Posterior vena cava (tissue), 2 donors: ENCODE measurements at regions of chr12 and their contacts with region 1.

Region 1: GRCh38 chr12:55926738-55927587 is 731 bp downstream of the PYM1 start:
- DNase-seq: peak; percentile 96

Region 2: GRCh38 chr12:55743116-55743921 is 183.6 kb before region 1 on chr12 and contains the start of gene GDF11:
- intact Hi-C with region 1: loop called in 1 of 2 experiments (anchors 5 kb)
- DNase-seq: peak; percentile 87
- total RNA-seq, gene GDF11: 8.4 to 11.0 TPM

Region 3: GRCh38 chr12:55829967-55830600 is 96.9 kb before region 1 on chr12:
- intact Hi-C with region 1: loop called in 1 of 2 experiments (anchors 5 kb)
- DNase-seq: peak; percentile 90

Region 4: GRCh38 chr12:55899082-55899481 is 27.9 kb before region 1 on chr12:
- intact Hi-C with region 1: no loop called
- DNase-seq: no peak

Region 5: GRCh38 chr12:55973598-55974307 is 46.8 kb after region 1 on chr12 and contains the start of gene RAB5B:
- intact Hi-C with region 1: no loop called
- DNase-seq: peak; percentile 100
- total RNA-seq, gene RAB5B: 108 to 109 TPM

Region 6: GRCh38 chr12:55996715-55997534 is 70.0 kb after region 1 on chr12 and contains the start of gene SUOX:
- intact Hi-C with region 1: loop called in 1 of 2 experiments (anchors 2 kb)
- DNase-seq: peak; percentile 99
- total RNA-seq, gene SUOX: 15.0 to 15.9 TPM

Region 7: GRCh38 chr12:56115334-56115733 is 188.4 kb after region 1 on chr12:
- intact Hi-C with region 1: no loop called
- DNase-seq: no peak